ENCODE measurements at regions of chrX and their contacts with region 1.

Region 1: DNA sequence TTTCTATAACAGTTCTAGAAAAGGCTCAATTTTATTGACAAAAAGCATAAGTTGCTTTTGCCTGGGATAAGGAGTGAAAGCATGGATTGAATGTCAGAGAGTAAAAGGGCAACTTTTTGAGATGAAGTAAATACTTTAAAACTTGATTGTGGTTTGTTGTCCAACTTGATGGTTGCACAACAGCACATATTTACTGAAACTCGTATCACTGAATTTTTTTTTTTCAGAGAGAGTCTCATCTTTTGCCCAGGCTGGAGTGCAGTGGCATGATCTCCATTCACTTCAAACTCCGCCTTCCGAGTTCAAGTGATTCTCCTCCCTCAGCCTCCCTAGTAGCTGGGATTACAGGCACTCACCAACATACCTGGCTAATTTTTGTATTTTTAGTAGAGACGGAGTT is 856.8 kb downstream of the SH3BGRL start:
- DNase-seq: no peak
- ATAC-seq: no peak
- H3K4me3 ChIP-seq: no peak overlapping the region
- H3K27ac ChIP-seq: no peak overlapping the region
- H3K4me1 ChIP-seq: no peaks in the 10 kb centered on the region
- H3K27me3 ChIP-seq: no peaks in the 10 kb centered on the region
- CTCF ChIP-seq: no peak
- EP300 ChIP-seq: no peak
- POLR2A ChIP-seq: no peak
- RAD21 ChIP-seq: no peak

Region 2: GRCh38 chrX:81996166-81996565 is 62.6 kb before region 1 on chrX:
- CTCF ChIA-PET with region 1: no interaction called
- POLR2A ChIA-PET with region 1: no interaction called
- RAD21 ChIA-PET with region 1: no interaction called
- SMC1A ChIA-PET with region 1: no interaction called
- in situ Hi-C with region 1: no loop called
- intact Hi-C with region 1: loop called (anchors 10 kb)
- DNase-seq: no peak
- ATAC-seq: no peak
- H3K4me3 ChIP-seq: no peak overlapping the region
- H3K27ac ChIP-seq: no peak overlapping the region
- H3K4me1 ChIP-seq: no peaks in the 10 kb centered on the region
- H3K27me3 ChIP-seq: no peaks in the 10 kb centered on the region
- CTCF ChIP-seq: no peak
- EP300 ChIP-seq: no peak
- POLR2A ChIP-seq: no peak
- RAD21 ChIP-seq: no peak